ENCODE measurements at regions of chr1 and their contacts with region 1.

Region 1: DNA sequence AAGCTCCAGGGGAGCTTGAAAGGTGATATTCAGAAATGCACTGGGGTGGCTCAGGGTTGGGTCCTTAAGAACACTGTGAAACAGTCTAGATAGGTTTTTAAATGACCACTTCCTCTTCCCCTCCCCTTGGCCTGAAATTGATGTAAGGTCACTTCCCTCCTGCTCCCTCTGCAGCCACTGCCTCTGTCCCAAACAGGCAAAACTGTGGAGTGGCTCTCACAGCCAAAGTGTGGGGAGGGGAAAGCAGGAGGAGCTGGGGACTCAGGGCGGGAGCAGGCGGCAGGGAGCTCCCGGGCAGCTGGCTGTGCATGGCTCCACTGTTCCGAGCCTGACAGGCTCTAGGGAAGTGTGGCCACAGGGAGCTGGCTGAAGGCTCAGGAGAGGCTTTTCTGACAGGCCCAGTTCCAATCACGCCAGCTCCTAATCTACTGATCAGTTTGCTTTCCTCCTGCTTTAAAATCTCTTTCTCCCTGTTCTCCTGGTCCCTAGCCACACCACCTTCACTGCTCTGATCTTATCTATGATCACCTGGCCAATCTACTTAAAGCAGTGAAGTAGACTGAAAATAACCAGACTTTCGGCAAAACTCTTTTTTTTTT is 5.1 kb upstream of the CSRP1 start:
- DNase-seq: peak; percentile 82 to 93 (median 92)
- ATAC-seq: peak; percentile 88 to 93
- H3K4me3 ChIP-seq: no peak overlapping the region
- H3K27ac ChIP-seq: peak overlapping the region; percentile 91
- H3K4me1 ChIP-seq: peaks cover 8% of the 10 kb centered on the region
- H3K27me3 ChIP-seq: no peaks in the 10 kb centered on the region

Region 2: DNA sequence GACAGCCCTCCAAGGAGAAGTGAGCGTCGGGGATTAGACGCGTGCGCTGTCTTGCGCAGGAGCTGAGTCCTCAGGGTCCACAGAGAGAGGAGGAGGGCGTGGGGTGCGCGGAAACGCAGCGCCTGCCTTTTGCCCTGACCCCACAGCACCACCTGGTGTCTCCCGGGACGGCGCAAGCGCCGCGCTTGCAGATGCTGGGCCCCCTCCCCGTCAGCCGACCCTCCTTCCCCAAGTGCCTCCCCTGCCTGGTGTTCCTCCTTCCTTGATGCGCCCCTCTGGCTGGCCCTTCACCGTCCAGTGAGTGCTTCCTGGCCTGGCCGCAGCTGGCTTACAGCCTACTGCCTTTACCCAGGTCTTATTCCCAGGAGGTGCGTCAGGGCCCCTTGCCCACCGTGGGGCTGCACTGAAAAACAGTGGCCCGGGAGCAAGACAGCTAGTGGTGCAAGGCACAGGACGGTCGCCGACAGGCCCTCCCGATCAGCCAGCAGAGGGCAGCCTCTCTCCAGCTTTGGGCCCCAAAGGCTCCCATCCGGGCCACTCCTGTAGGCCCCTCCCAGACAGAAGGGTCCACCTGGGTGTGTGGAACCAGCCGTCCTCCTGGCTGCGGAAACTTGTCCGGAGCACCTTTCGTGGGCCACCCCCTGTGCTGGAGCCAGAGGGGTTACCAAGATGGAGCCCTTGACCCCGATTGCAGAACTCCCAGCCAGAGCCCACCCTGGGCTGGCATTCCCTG is 30.1 kb before region 1 on chr1:
- intact Hi-C with region 1: loop called (anchors 1 to 5 kb)
- DNase-seq: peak; percentile 90 to 95 (median 95)
- ATAC-seq: peak; percentile 87 to 92
- H3K4me3 ChIP-seq: peak overlapping the region; percentile 1
- H3K27ac ChIP-seq: peak overlapping the region; percentile 12
- H3K4me1 ChIP-seq: peaks cover 6% of the 10 kb centered on the region
- H3K27me3 ChIP-seq: no peaks in the 10 kb centered on the region